ENCODE measurements at regions of chr1 and their contacts with region 1.

Region 1: GRCh38 chr1:93846211-93846991 is 32.6 kb downstream of the DNTTIP2 start:
- DNase-seq: no peak
- H3K4me3 ChIP-seq: peak overlapping the region; percentile 83
- CTCF ChIP-seq: peak; percentile 57

Region 2: DNA sequence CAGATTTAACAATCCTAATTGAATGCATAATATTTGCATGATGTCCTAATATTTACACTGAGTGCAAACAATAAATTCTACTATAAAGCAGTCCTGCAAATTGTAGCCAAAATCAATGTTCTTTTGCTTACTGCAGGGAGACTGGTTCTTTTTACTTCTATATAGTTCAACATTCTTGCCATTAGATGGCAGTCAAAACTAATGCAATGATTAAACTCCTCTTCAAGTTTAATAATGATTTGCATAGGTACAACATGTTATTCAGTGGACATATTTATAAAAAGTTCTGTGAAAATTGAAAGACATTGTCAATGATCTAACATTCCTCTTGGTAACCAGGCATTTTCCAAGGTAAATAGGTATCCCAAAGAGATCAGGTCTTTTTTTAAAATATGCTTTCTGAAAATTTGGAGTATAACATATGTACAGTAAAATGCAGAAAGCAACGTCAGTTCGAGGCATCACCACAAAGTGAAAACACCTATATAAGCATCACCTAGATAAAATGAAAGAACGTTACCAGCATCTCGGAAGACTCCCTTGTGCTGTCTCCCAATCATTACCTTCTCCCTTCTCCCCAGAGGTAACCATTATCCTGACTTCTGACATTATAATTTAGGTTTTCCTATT is 408.3 kb before region 1 on chr1:
- CTCF ChIA-PET with region 1: interaction called, 24 read pairs
- POLR2A ChIA-PET with region 1: no interaction called
- DNase-seq: no peak
- H3K4me3 ChIP-seq: no peak overlapping the region
- CTCF ChIP-seq: peak; percentile 32

Region 3: GRCh38 chr1:93615582-93616150 is 230.7 kb before region 1 on chr1:
- CTCF ChIA-PET with region 1: interaction called, 22 read pairs
- POLR2A ChIA-PET with region 1: no interaction called
- DNase-seq: no peak
- H3K4me3 ChIP-seq: no peak overlapping the region
- CTCF ChIP-seq: no peak

Region 4: DNA sequence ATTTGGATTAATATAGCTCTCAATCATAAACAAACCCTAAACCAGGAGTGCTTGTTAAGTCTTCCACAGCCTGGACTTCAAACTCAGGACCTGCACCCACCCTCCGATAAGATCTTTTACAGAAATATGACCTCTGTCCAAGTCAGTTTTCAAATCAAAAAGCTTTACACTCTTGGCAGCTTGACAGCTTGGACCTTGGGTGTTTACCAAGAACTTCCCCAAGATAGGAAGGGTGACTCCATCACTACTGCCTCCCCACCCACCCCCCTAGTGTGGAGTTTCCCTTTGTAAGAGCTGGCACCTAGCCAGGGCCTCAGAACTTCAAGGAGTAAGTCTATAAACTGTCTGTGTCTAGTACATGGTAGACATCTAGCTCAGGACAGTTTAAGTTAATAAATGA is 174.3 kb before region 1 on chr1:
- CTCF ChIA-PET with region 1: interaction called, 30 read pairs
- POLR2A ChIA-PET with region 1: no interaction called
- DNase-seq: no peak
- H3K4me3 ChIP-seq: no peak overlapping the region
- CTCF ChIP-seq: no peak

Region 5: GRCh38 chr1:93827633-93828366 is 18.6 kb before region 1 on chr1:
- CTCF ChIA-PET with region 1: interaction called, 34 read pairs
- POLR2A ChIA-PET with region 1: no interaction called
- DNase-seq: no peak
- H3K4me3 ChIP-seq: no peak overlapping the region
- CTCF ChIP-seq: no peak